Mammary epithelial cell (primary cell): ENCODE measurements at regions of chr9 and their contacts with region 1.

Region 1: GRCh38 chr9:104863180-104863883 is 64.6 kb downstream of the ABCA1 start:
- DNase-seq: peak; percentile 69
- H3K4me3 ChIP-seq: no peak overlapping the region
- H3K27ac ChIP-seq: no peak overlapping the region
- H3K4me1 ChIP-seq: peaks cover 27% of the 10 kb centered on the region
- H3K27me3 ChIP-seq: no peaks in the 10 kb centered on the region
- CTCF ChIP-seq: peak; percentile 85 to 94

Region 2: DNA sequence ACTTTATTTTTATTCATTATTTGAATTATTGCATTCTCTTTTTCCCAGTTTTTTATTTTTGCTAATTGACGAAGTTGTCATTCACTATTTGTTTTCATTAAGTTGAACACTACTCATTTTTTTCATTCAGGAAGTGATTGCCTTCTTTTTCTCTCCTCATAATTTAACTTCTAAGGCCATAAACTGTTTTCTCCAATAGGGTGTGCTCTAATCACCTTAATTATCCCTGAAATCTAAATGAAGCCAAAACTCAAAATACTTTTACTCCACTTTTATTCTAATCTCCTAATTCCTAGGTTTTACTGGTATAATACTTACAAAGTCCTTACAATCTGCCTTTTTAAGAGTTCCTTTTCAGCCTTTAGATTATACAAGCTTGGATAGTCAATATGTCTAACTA is 255.0 kb before region 1 on chr9:
- CTCF ChIA-PET with region 1: no interaction called
- dilution Hi-C with region 1: no loop called
- in situ Hi-C with region 1: no loop called
- intact Hi-C with region 1: no loop called
- DNase-seq: no peak
- H3K4me3 ChIP-seq: no peak overlapping the region
- H3K27ac ChIP-seq: no peak overlapping the region
- H3K4me1 ChIP-seq: no peaks in the 10 kb centered on the region
- H3K27me3 ChIP-seq: no peaks in the 10 kb centered on the region
- CTCF ChIP-seq: peak; percentile 23 to 39

Region 3: DNA sequence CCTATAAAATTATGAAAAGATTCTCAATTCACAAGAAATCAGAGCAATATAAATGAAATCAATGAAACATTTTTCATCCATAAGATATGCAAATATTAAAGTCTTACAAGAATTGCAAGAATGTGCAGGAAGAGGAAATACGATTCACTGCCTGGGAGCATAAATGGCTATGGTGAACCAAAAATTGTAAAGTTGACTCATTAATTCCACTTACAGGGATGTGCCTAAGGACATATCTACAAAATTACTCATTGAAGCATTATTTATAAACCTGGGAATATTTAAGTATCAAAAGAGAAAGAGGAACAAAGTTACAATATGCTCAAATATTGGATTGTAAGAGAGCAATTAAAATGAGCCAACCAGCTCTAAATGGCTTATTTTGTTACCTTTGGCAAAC is 122.7 kb before region 1 on chr9:
- CTCF ChIA-PET with region 1: no interaction called
- dilution Hi-C with region 1: no loop called
- in situ Hi-C with region 1: no loop called
- intact Hi-C with region 1: no loop called
- DNase-seq: peak; percentile 35
- H3K4me3 ChIP-seq: no peak overlapping the region
- H3K27ac ChIP-seq: no peak overlapping the region
- H3K4me1 ChIP-seq: no peaks in the 10 kb centered on the region
- H3K27me3 ChIP-seq: no peaks in the 10 kb centered on the region
- CTCF ChIP-seq: no peak

Region 4: DNA sequence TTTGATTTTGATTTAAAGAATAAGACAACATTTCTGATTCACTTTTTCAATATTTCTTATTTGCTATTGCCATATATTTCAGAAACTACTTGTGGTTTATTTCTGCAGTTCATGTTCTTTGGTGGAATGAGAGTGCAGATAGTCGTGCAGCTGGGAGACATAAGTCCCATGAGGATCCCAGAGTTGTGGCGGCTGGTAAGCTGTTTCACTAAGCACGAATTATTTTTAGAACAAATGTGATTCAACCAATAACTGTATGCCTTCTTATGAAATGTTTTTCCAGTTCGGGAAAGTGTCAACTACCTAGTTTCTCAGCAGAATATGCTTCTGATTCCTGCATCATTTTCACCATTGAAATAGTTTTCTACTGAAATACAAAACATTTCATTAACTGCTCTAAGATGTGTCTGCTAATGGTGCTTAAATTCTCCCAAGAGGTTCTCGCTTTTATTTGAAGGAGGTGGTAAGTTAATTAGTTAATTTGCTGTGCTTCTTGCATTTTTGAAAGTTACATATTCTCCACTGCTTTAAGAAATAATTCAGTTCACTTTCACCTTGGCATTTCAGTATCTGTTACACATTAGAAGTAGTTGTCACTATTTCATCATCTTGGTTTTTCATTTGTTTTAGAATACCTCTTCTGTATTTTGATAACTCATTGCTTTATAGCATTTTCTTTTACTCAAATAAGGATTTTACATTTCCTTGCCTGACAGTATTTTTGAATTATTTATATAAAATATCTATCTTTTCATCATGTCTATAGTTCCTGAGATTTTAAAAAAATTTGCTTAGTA is 90.4 kb before region 1 on chr9:
- CTCF ChIA-PET with region 1: no interaction called
- dilution Hi-C with region 1: no loop called
- in situ Hi-C with region 1: no loop called
- intact Hi-C with region 1: no loop called
- DNase-seq: no peak
- H3K4me3 ChIP-seq: no peak overlapping the region
- H3K27ac ChIP-seq: no peak overlapping the region
- H3K4me1 ChIP-seq: peaks cover 11% of the 10 kb centered on the region
- H3K27me3 ChIP-seq: no peaks in the 10 kb centered on the region
- CTCF ChIP-seq: no peak

Region 5: GRCh38 chr9:104991144-104991953 is 128.0 kb after region 1 on chr9:
- CTCF ChIA-PET with region 1: interaction called, 4 read pairs
- dilution Hi-C with region 1: no loop called
- in situ Hi-C with region 1: no loop called
- intact Hi-C with region 1: loop called (anchors 10 kb)
- DNase-seq: peak; percentile 78
- H3K4me3 ChIP-seq: peak overlapping the region; percentile 52 to 61 (median 60)
- H3K27ac ChIP-seq: peak overlapping the region; percentile 48
- H3K4me1 ChIP-seq: peaks cover 13% of the 10 kb centered on the region
- H3K27me3 ChIP-seq: no peaks in the 10 kb centered on the region
- CTCF ChIP-seq: no peak

Region 6: DNA sequence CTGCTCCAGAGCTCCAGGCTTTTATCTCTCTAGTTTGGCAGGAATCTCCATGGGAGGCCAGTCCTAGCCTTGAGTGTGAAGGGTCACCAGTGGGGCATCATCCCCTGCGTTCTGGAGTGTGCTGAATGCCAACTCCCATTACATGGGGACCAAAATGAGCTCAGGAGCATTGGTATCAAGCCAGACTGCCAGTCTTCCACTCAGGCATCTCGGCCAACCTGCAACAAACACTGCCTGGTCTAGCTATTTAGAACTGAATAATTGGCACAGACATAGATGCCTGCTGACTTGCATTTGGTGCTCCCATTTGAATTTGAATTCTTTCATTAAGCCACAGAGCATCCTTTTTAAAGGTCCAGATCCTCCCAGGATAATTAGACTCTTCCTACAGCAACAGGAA is 181.2 kb after region 1 on chr9:
- CTCF ChIA-PET with region 1: no interaction called
- dilution Hi-C with region 1: no loop called
- in situ Hi-C with region 1: no loop called
- intact Hi-C with region 1: loop called (anchors 5 kb)
- DNase-seq: no peak
- H3K4me3 ChIP-seq: no peak overlapping the region
- H3K27ac ChIP-seq: no peak overlapping the region
- H3K4me1 ChIP-seq: no peaks in the 10 kb centered on the region
- H3K27me3 ChIP-seq: no peaks in the 10 kb centered on the region
- CTCF ChIP-seq: no peak

Region 7: DNA sequence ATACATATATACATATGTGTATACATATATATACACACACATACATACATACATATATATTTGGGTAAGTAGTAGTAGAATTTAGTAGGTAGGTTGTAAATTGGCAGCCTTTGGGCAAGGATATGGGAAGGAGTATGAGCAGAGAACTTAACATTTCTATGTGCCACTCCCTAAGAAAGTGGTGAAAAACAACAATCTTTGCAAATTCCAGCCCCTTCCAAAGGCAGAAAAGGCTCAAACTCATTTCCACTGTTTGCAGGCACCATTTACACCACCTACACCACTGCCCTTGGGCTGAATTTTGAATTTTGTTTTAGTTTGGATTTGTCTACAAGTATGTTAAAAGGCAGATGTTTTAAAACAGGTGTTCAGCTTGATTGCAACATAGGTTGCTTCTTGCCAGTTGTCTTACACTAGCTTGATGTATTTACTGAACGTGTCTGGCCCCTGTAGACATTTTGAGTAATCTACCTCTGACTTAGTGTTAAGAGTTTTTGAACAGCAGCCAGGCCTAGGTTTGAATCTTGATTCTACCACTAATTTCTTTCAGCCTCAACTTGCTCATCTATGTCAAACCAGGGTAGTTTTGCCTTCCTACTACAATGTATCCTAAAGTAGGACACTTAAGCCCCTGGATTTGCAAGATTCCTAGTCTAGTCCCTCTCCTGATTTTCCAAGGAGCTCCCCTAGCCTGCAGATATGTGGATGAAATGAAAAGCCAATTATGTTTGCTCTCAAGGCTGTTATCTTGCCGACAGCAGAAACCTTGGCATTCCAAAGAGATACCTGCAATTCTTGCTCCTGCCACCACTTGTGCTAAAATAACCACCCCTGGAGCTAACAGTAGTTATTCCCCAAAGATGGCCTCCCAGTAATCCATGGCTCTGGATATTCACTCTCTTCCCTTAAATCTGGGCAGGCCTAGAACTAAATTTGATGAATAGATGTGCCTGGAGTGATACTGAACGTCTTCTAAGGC is 224.9 kb after region 1 on chr9:
- CTCF ChIA-PET with region 1: no interaction called
- dilution Hi-C with region 1: no loop called
- in situ Hi-C with region 1: no loop called
- intact Hi-C with region 1: loop called (anchors 10 kb)
- DNase-seq: no peak
- H3K4me3 ChIP-seq: no peak overlapping the region
- H3K27ac ChIP-seq: no peak overlapping the region
- H3K4me1 ChIP-seq: no peaks in the 10 kb centered on the region
- H3K27me3 ChIP-seq: no peaks in the 10 kb centered on the region
- CTCF ChIP-seq: peak in 1 of 2 donors; percentile 7

Region 8: DNA sequence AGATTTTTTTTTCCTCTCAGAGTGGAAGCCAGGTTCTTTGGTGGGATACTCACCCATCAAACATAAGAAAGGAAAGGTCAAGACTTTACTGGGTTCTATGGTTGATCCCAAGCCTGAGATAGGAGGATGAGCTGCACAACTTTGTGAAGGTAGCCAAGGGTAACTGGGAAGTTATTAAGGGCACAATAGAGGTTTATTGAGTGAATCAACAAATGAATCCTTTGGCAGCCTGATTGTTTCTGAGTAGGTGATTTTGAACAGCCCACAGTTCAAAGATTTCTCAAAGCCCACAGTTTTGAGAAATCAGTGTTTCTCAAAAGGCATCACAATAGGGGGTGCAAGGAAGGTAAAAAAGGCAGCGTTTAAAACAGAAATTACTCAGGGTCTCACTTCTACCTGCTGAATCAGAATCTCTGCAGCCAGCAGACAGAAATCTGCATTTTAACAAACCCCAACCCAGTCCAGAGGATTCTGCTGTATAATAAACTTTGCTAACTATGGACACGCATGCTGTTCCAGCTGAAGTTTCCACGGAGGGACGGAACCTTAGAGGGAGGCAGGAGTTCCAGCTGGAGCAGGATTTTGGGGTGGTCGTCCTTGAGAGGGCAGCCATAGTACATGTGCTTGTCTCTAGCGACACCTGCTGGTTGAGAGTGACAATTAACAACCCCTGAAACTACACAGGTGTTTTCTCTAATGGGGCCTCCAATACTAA is 551.8 kb after region 1 on chr9:
- CTCF ChIA-PET with region 1: no interaction called
- dilution Hi-C with region 1: no loop called
- in situ Hi-C with region 1: loop called (anchors 10 to 25 kb)
- intact Hi-C with region 1: loop called (anchors 1 kb)
- DNase-seq: peak; percentile 22
- H3K4me3 ChIP-seq: no peak overlapping the region
- H3K27ac ChIP-seq: no peak overlapping the region
- H3K4me1 ChIP-seq: no peaks in the 10 kb centered on the region
- H3K27me3 ChIP-seq: no peaks in the 10 kb centered on the region
- CTCF ChIP-seq: peak; percentile 71 to 86